Activated CD4-positive, alpha-beta T cell treated with anti-CD3 and anti-CD28 coated beads for 36 hours (primary cell): ENCODE measurements at regions of chr20 and their contacts with region 1.

Region 1: GRCh38 chr20:49413677-49414076 is 68.8 kb downstream of the KCNB1 start:
- DNase-seq: no peak
- ATAC-seq: no peak
- H3K4me3 Mint-ChIP-seq: no peak overlapping the region
- H3K27ac Mint-ChIP-seq: no peak overlapping the region
- H3K4me1 Mint-ChIP-seq: no peaks in the 10 kb centered on the region
- H3K27me3 Mint-ChIP-seq: peaks cover 14% of the 10 kb centered on the region

Region 2: DNA sequence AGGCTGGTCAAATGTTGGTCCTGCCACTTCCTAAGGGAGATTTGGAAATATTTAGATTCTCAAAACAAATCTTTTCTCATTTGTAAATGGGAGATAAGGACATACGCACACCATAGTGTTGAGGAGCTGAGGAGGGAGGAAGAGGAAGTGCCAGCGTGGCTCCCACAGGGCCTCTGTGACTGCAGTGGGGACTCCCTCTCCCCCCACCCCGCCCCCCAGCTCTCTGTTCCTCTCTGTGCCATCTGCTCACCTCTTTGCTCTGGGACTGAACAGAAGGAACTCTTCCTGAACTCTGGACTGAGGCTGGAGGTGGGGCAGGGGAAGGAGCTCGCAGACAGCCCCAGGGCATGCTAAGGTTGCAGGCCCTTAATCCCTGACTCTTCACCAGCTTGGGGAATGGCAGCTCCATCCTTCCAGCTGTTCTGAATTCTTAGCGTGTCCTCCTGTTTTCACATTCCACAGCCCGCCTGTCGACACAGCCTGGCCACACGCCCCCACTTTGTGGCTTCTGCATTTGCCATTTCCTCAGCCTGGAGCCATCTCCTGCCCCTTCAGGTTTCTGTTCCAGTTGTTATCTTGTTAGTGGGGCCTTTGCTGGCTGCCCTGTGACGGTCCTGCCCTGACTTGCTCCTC is 183.0 kb before region 1 on chr20:
- CTCF ChIA-PET with region 1: no interaction called
- POLR2A ChIA-PET with region 1: no interaction called
- intact Hi-C with region 1: no loop called
- DNase-seq: no peak
- ATAC-seq: no peak
- H3K4me3 Mint-ChIP-seq: no peak overlapping the region
- H3K27ac Mint-ChIP-seq: peak overlapping the region; percentile 20
- H3K4me1 Mint-ChIP-seq: no peaks in the 10 kb centered on the region
- H3K27me3 Mint-ChIP-seq: no peaks in the 10 kb centered on the region

Region 3: GRCh38 chr20:49501917-49502316 is 88.2 kb after region 1 on chr20:
- CTCF ChIA-PET with region 1: no interaction called
- POLR2A ChIA-PET with region 1: interaction called, 10 read pairs
- intact Hi-C with region 1: no loop called
- DNase-seq: no peak
- ATAC-seq: no peak
- H3K4me3 Mint-ChIP-seq: no peak overlapping the region
- H3K27ac Mint-ChIP-seq: no peak overlapping the region
- H3K4me1 Mint-ChIP-seq: no peaks in the 10 kb centered on the region
- H3K27me3 Mint-ChIP-seq: peaks cover 21% of the 10 kb centered on the region